PC-9 (cell line): ENCODE measurements at regions of chr6 and their contacts with region 1.

Region 1: GRCh38 chr6:24571361-24571760 is 74.6 kb downstream of the KIAA0319 start:
- DNase-seq: no peak
- H3K4me3 ChIP-seq: no peak overlapping the region
- H3K27ac ChIP-seq: no peak overlapping the region
- H3K4me1 ChIP-seq: no peaks in the 10 kb centered on the region
- H3K27me3 ChIP-seq: no peaks in the 10 kb centered on the region
- CTCF ChIP-seq: no peak

Region 2: DNA sequence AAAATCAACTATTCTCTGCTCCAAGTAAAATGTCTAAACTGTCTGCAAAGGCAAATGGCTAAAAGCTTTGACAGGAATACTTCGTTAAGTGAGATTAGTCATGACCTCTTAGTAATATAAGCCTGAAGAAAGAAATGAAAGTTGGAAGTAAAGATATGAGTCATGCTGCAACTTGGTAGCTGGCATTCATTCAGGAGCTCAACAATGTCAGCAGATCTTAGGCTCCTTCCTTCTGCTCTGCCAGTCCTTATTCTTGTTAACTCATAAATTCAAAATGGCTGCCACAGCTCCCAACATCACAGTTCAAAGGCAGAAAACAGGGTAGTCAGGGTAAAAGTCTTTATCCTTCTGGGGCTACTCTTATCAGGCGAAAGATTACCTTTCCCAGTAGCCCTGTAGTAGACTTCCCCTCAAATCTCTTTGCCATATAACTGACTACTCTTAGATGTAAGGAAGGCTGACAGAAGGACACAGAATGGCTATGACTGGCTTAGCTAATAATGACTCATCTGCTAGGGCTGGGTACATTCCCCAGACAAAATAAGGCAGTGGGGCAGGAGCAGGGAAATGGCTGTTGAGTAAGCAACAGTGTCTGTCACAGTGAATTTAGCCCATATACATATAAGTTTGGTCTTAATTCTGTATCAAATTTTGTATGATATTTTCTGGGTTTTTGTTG is 172.0 kb after region 1 on chr6:
- CTCF ChIA-PET with region 1: no interaction called
- POLR2A ChIA-PET with region 1: no interaction called
- intact Hi-C with region 1: no loop called
- DNase-seq: peak; percentile 58 to 90
- H3K4me3 ChIP-seq: peak overlapping the region; percentile 44; the same call in 1 of the 2 replicates
- H3K27ac ChIP-seq: peak overlapping the region; percentile 97
- H3K4me1 ChIP-seq: peaks cover 26% of the 10 kb centered on the region
- H3K27me3 ChIP-seq: no peaks in the 10 kb centered on the region
- CTCF ChIP-seq: no peak

Region 3: DNA sequence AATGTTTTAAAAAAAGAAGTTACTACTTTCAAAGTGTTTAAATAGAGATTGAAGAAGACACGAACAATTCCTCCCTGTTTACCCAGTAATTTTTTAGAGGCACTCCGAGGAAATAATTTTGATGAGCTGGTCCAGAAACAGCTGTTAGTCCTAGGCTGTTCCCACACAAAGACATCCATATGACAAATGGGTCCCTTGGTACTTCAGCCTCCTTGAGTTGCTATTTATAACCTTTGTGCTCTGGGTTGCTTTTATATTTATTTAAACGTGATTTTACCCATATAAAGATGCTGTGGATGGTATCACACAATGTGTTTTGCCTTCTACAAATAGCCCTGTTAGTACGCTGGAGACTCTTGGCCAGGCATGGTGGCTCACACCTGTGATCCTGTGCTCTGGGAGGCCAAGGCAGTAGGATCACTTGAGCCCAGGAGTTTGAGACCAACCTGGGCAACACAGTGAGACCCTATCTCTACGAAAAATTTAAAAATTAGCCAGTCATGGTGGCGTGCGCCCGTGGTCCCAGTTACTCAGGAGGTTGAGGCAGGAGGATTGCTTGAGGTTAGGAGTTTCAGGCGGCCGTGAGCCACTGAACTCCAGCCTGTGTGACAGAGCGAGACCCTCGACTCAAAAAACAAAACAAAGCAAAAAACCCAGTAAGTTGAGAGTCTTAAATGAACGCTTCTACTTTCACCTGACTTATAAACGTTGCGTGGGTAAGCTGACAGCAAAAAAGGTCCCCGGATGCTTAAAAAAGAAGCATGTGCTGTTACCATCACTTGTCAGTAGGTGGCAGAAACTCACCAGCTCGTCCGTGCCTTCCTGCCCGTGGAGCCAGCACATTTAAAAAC is 284.3 kb after region 1 on chr6:
- CTCF ChIA-PET with region 1: no interaction called
- POLR2A ChIA-PET with region 1: interaction called, 26 read pairs
- intact Hi-C with region 1: no loop called
- DNase-seq: peak; percentile 44 to 58
- H3K4me3 ChIP-seq: no peak overlapping the region
- H3K27ac ChIP-seq: no peak overlapping the region
- H3K4me1 ChIP-seq: peaks cover 26% of the 10 kb centered on the region
- H3K27me3 ChIP-seq: no peaks in the 10 kb centered on the region
- CTCF ChIP-seq: peak; percentile 89